Naive thymus-derived CD4-positive, alpha-beta T cell (primary cell): ENCODE measurements at regions of chrX and their contacts with region 1.

Region 1: GRCh38 chrX:132615391-132616131 is 126.7 kb upstream of the MBNL3 start:
- DNase-seq: peak; percentile 5 to 39 (median 22)
- ATAC-seq: peak; percentile 70
- H3K4me3 ChIP-seq: no peak overlapping the region
- H3K4me3 Mint-ChIP-seq: no peak overlapping the region
- H3K27ac ChIP-seq: no peak overlapping the region
- H3K27ac Mint-ChIP-seq: peak overlapping the region in 1 of 9 donors; percentile 4
- H3K4me1 ChIP-seq: no peaks in the 10 kb centered on the region
- H3K4me1 Mint-ChIP-seq: peaks cover 0 to 3% (median 0%) of the 10 kb centered on the region in 7 donors
- H3K27me3 ChIP-seq: no peaks in the 10 kb centered on the region
- H3K27me3 Mint-ChIP-seq: peaks cover 0 to 3% (median 0%) of the 10 kb centered on the region in 5 donors

Region 2: GRCh38 chrX:131830400-131831184 is 785.0 kb before region 1 on chrX:
- CTCF ChIA-PET with region 1: interaction called, 4 read pairs
- POLR2A ChIA-PET with region 1: no interaction called
- intact Hi-C with region 1: loop called (anchors 1 to 5 kb)
- DNase-seq: peak in 8 of 9 donors; percentile 59 to 83 (median 72)
- ATAC-seq: peak; percentile 76
- H3K4me3 ChIP-seq: peak overlapping the region; percentile 37
- H3K4me3 Mint-ChIP-seq: peak overlapping the region; percentile 61 to 90 (median 72)
- H3K27ac ChIP-seq: peak overlapping the region; percentile 55
- H3K27ac Mint-ChIP-seq: peak overlapping the region; percentile 42 to 91 (median 81)
- H3K4me1 ChIP-seq: peaks cover 0 to 14% of the 10 kb centered on the region in 2 donors
- H3K4me1 Mint-ChIP-seq: peaks cover 1 to 44% (median 35%) of the 10 kb centered on the region in 7 donors
- H3K27me3 ChIP-seq: no peaks in the 10 kb centered on the region
- H3K27me3 Mint-ChIP-seq: no peaks in the 10 kb centered on the region

Region 3: DNA sequence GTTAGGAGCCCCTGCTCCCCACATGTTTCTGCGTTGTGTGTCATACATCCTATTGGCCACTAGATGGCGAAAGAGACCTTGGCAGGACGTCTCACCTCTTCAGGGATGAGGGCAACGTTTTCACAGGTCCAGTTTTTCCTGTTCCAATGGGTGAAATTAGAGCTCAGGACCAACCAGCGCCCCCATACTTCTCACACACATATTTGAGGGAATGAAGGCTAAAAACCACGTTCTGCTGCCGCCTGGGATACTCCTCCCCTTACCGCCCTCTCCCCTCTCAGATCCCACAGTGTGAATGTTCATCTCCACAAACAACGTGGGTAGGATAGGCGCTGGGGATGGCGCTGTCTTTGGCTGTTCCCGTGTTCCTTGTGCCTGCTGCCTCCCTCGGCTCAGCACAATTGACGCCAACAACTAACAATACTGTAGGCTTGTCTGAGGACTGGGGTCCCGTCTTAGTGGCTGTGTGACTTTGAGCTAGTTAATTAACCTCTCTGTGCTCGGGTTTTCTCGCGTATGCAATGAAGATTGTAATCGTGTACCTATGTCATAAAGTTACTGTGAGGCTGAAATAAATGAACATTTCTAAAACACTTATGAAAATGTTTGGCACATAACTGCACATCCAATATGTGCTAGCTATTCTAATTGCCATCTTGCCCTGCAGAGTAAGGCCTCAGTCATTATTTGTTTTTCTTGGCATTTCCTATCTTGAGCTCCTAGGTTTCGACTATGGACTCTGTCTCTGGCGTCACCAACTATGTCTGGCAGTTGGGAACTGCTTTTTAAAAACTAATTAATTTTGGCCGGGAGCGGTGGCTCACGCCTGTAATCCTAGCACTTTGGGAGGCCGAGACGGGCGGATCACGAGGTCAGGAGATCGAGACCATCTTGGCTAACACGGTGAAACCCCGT is 773.8 kb before region 1 on chrX:
- CTCF ChIA-PET with region 1: no interaction called
- POLR2A ChIA-PET with region 1: no interaction called
- intact Hi-C with region 1: loop called (anchors 1 to 2 kb)
- DNase-seq: peak in 8 of 9 donors; percentile 5 to 67 (median 49)
- ATAC-seq: peak; percentile 81
- H3K4me3 ChIP-seq: no peak overlapping the region
- H3K4me3 Mint-ChIP-seq: peak overlapping the region in 1 of 10 donors; percentile 56
- H3K27ac ChIP-seq: no peak overlapping the region
- H3K27ac Mint-ChIP-seq: no peak overlapping the region
- H3K4me1 ChIP-seq: no peaks in the 10 kb centered on the region
- H3K4me1 Mint-ChIP-seq: peaks cover 0 to 9% (median 0%) of the 10 kb centered on the region in 7 donors
- H3K27me3 ChIP-seq: no peaks in the 10 kb centered on the region
- H3K27me3 Mint-ChIP-seq: peaks cover 0 to 2% (median 0%) of the 10 kb centered on the region in 5 donors

Region 4: GRCh38 chrX:131854581-131854980 is 761.0 kb before region 1 on chrX:
- CTCF ChIA-PET with region 1: interaction called, 4 read pairs
- POLR2A ChIA-PET with region 1: no interaction called
- intact Hi-C with region 1: loop called in 1 of 2 experiments (anchors 1 kb)
- DNase-seq: peak in 5 of 9 donors; percentile 25 to 48 (median 36)
- ATAC-seq: no peak
- H3K4me3 ChIP-seq: no peak overlapping the region
- H3K4me3 Mint-ChIP-seq: no peak overlapping the region
- H3K27ac ChIP-seq: no peak overlapping the region
- H3K27ac Mint-ChIP-seq: peak overlapping the region in 1 of 9 donors; percentile 70
- H3K4me1 ChIP-seq: no peaks in the 10 kb centered on the region
- H3K4me1 Mint-ChIP-seq: no peaks in the 10 kb centered on the region
- H3K27me3 ChIP-seq: no peaks in the 10 kb centered on the region
- H3K27me3 Mint-ChIP-seq: no peaks in the 10 kb centered on the region

Region 5: DNA sequence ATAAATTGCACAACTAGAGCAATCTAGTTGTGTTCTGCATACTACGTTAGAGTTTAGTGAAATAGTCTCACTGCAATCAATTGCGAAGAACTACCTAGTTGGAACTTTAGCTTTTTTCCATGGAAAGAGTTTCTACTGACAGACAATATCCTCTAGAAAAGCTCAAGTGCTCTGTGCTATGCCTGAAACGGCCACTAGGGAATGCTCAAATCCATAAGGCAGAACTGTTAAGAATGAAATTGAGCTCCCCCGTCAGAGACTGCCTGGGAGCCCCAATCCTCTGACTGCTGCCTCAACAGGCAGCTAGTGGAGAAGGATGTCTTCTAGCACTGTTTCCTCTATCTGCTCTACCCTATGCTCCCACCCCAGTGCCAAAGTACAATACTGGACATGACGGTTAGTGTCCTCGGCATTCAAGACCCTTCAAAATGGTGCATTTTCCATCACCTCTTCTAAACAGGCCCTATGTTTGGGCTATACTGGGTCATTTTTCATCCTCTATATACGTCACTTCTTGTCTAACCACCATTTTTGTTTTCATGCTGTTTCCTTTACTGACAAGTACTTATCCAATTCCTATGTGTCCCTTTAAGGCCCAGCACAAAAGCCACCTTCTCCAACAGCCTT is 523.0 kb before region 1 on chrX:
- CTCF ChIA-PET with region 1: interaction called, 3 read pairs
- POLR2A ChIA-PET with region 1: no interaction called
- intact Hi-C with region 1: loop called (anchors 1 kb)
- DNase-seq: peak; percentile 5 to 52 (median 33)
- ATAC-seq: peak; percentile 83
- H3K4me3 ChIP-seq: no peak overlapping the region
- H3K4me3 Mint-ChIP-seq: no peak overlapping the region
- H3K27ac ChIP-seq: no peak overlapping the region
- H3K27ac Mint-ChIP-seq: no peak overlapping the region
- H3K4me1 ChIP-seq: no peaks in the 10 kb centered on the region
- H3K4me1 Mint-ChIP-seq: peaks cover 0 to 11% (median 7%) of the 10 kb centered on the region in 7 donors
- H3K27me3 ChIP-seq: no peaks in the 10 kb centered on the region
- H3K27me3 Mint-ChIP-seq: peaks cover 0 to 7% (median 0%) of the 10 kb centered on the region in 5 donors

Region 6: GRCh38 chrX:132226169-132226568 is 389.4 kb before region 1 on chrX:
- CTCF ChIA-PET with region 1: interaction called, 3 read pairs
- POLR2A ChIA-PET with region 1: no interaction called
- intact Hi-C with region 1: loop called (anchors 1 kb)
- DNase-seq: peak in 2 of 9 donors; percentile 11 to 12
- ATAC-seq: no peak
- H3K4me3 ChIP-seq: no peak overlapping the region
- H3K4me3 Mint-ChIP-seq: no peak overlapping the region
- H3K27ac ChIP-seq: no peak overlapping the region
- H3K27ac Mint-ChIP-seq: no peak overlapping the region
- H3K4me1 ChIP-seq: no peaks in the 10 kb centered on the region
- H3K4me1 Mint-ChIP-seq: peaks cover 5 to 11% (median 9%) of the 10 kb centered on the region in 7 donors
- H3K27me3 ChIP-seq: no peaks in the 10 kb centered on the region
- H3K27me3 Mint-ChIP-seq: no peaks in the 10 kb centered on the region

Region 7: DNA sequence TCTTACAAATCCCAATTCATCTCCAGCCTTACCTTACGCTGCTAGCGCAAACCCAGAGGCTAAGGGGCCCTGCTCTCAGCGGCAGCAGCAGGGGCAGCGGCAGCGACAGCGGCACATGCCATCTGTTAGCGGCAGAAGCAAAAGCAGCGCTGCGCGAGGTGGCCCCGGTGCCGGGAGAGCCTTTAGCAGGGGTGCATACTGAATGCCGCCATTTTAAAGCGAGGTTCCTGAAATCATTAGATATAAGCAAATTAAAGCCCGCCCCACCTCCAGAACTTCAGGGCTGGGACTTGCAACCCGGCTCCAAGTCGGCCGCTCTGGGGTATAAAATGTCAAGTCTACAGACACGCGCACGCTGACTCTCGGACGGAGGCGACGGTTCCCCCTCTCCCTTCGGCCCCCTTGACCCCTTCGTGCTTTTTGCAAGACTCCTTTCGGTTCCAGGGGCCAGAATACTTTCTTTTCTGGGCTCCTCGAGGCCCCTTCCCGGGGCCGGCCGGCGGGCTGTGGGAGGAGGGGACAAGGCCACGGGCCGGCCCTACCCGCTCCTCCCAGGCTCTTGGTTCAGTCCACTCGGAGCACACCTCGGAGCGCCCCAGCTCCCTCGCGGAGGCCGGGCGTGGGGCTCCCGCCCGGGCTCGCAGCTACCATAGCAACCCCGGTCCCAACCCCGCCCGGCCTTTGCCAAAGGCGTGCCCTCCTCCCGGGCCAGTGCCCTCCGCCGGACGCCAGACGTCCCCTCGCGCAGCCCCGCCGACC is 126.6 kb before region 1 on chrX and contains the start of gene MBNL3:
- CTCF ChIA-PET with region 1: interaction called, 4 read pairs
- POLR2A ChIA-PET with region 1: no interaction called
- intact Hi-C with region 1: loop called (anchors 1 to 5 kb)
- DNase-seq: peak; percentile 35 to 78 (median 70)
- ATAC-seq: peak; percentile 77
- H3K4me3 ChIP-seq: peak within 1 kb of the TSS; percentile 82
- H3K4me3 Mint-ChIP-seq: peak within 1 kb of the TSS; percentile 93 to 99 (median 96)
- H3K27ac ChIP-seq: peak within 1 kb of the TSS; percentile 83
- H3K27ac Mint-ChIP-seq: peak within 1 kb of the TSS; percentile 78 to 98 (median 94)
- H3K4me1 ChIP-seq: peaks cover 4 to 15% of the 10 kb centered on the region in 2 donors
- H3K4me1 Mint-ChIP-seq: peaks cover 16 to 59% (median 44%) of the 10 kb centered on the region in 7 donors
- H3K27me3 ChIP-seq: no peaks in the 10 kb centered on the region
- H3K27me3 Mint-ChIP-seq: peaks cover 0 to 10% (median 0%) of the 10 kb centered on the region in 5 donors
- total RNA-seq, gene MBNL3: 20.8 to 34.0 (median 29.7) TPM